Right cardiac atrium (tissue), 5 donors: ENCODE measurements at regions of chr1 and their contacts with region 1.

Region 1: DNA sequence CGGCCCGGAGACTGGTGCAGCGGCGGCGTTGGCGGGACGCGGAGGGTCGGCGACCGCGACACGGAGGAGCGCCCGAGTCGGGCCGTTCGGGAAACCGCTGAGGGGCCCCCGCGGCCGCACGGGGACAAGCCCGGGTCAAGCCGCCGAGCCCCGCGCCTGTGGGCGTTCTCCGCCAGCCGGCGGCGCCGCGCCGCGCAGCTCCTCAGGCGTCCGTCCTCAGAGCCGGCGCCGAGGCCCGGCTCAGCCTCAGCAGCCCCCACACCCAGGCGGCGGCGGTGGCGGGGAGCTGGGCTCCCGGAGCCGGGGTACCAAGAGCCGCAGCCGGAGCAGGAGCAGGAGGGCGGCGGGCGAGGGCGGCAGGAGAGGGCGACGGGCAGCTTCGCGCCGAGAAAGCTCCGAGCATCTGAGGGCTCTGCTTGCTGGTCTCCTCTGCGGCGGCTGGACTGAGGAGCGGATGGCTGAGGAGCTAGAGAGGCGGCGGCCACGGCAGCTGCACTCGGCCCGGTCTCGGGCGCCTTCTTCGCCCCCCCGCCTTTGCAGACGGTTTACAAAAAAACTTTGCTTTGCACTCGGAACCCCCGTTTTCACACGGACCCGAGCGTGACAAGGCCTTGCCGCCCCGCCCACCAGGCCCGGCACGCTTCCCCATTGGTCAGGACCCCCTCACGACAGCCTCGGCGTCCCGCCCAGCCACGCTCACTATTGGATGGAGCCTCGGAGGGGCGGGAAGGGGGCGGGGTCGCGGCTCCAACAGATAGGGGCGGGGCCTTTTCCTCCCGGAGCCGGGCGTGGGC is at the start of gene SLC30A1:
- DNase-seq: peak; percentile 100
- ATAC-seq: peak; percentile 97 to 98
- H3K4me3 ChIP-seq: peak within 1 kb of the TSS; percentile 80
- H3K27ac ChIP-seq: peak within 1 kb of the TSS; percentile 97
- H3K4me1 ChIP-seq: peaks cover 8% of the 10 kb centered on the region
- H3K27me3 ChIP-seq: no peaks in the 10 kb centered on the region
- total RNA-seq, gene SLC30A1: 14.5 to 19.2 (median 14.8) TPM

Region 2: DNA sequence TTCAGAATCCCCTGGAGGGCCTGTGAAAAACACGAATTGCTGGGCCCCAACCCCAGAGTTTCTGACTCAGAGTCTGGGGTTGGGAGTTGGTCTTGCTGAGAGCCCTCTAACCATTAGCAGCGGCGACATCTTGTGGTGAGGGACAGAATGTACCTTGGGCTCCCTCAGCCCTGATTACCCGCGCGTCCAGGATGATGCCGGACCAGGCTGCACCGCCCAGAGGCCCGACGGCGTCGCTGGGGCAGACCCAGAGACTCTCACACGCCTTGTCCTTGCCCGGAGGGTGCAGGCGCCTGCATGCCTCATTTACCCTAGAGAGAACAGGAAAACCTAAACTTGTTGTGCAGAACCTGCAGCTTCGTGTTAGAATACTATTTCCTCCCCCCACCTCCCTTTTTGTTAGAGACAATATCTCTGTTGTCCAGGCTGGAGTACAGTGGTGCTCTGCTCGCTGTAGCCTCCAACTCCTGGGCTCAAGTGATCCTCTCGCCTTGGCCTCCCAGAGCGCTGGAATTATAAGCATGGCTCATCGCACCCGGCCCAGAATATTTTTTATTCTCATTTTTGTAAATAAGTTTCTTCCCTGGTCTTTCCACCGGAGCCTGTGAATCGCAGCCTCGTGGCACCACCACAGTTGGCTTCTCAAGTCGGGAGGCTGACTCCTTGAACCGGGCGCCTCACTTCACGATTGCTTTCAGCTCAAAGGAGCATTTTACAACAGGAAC is 64.6 kb before region 1 on chr1:
- intact Hi-C with region 1: loop called in 1 of 4 experiments (anchors 10 kb)
- DNase-seq: peak; percentile 82 to 89 (median 88)
- ATAC-seq: peak; percentile 91
- H3K4me3 ChIP-seq: no peak overlapping the region
- H3K27ac ChIP-seq: no peak overlapping the region
- H3K4me1 ChIP-seq: no peaks in the 10 kb centered on the region
- H3K27me3 ChIP-seq: no peaks in the 10 kb centered on the region

Region 3: GRCh38 chr1:211520641-211521040 is 58.2 kb before region 1 on chr1:
- intact Hi-C with region 1: loop called in 2 of 4 experiments (anchors 5 to 10 kb)
- DNase-seq: no peak
- ATAC-seq: no peak
- H3K4me3 ChIP-seq: no peak overlapping the region
- H3K27ac ChIP-seq: no peak overlapping the region
- H3K4me1 ChIP-seq: peaks cover 2% of the 10 kb centered on the region
- H3K27me3 ChIP-seq: no peaks in the 10 kb centered on the region

Region 4: DNA sequence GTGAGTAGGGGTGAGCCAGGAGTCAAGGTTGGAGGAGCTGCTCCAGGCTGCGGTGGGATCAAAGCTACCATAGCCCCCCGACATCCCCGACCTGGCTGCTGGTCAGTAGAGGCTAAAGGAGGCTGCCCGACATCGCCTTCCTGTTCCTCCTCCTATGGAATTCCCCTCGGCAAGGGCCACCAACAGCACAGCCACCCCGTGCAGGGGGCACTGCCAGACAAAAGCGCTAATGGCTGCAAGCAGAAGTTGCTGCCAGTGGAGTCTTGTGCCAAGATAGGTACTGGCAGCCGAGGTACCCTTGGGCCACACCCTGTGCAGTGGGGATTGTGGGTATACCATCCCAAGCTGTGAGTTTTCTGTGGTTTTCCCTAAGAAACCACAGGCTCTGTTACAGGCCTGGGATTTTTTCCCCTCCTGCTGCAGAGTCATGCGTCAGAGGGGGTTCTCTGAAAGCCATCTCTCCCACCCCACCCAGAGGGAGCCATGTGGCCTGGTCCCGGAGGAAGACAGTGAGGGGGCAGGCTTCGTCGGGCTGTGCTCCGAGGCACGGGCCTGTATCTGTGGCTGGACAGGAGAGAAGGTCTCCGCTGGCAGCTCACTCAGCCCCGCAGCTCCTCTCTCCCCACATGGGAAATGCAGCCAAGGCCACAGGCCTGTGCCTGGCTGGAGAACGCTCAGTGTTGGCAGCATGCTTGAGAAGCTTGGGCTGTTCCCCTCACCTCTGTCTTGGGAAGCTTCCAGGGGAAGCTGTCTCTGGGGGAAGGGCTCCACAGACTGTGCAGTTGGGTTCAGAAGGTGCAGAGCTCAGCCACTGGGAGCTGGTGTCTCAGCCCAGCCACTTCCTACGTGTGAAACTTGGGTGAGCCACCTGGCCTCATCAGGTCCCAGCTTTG is 54.0 kb after region 1 on chr1:
- intact Hi-C with region 1: loop called in 1 of 4 experiments (anchors 5 kb)
- DNase-seq: peak; percentile 62 to 84 (median 84)
- ATAC-seq: peak; percentile 77 to 83
- H3K4me3 ChIP-seq: no peak overlapping the region
- H3K27ac ChIP-seq: peak overlapping the region; percentile 68
- H3K4me1 ChIP-seq: peaks cover 24% of the 10 kb centered on the region
- H3K27me3 ChIP-seq: no peaks in the 10 kb centered on the region

Region 5: GRCh38 chr1:211648980-211649934 is 70.4 kb after region 1 on chr1:
- intact Hi-C with region 1: loop called in 2 of 4 experiments (anchors 5 kb)
- DNase-seq: peak in 2 of 3 donors; percentile 60 to 82
- ATAC-seq: peak; percentile 85 to 86
- H3K4me3 ChIP-seq: no peak overlapping the region
- H3K27ac ChIP-seq: no peak overlapping the region
- H3K4me1 ChIP-seq: no peaks in the 10 kb centered on the region
- H3K27me3 ChIP-seq: no peaks in the 10 kb centered on the region

Region 6: GRCh38 chr1:211654838-211655787 is 76.3 kb after region 1 on chr1:
- intact Hi-C with region 1: loop called in 3 of 4 experiments (anchors 1 to 5 kb)
- DNase-seq: peak; percentile 89 to 96 (median 96)
- ATAC-seq: peak; percentile 93 to 95
- H3K4me3 ChIP-seq: no peak overlapping the region
- H3K27ac ChIP-seq: no peak overlapping the region
- H3K4me1 ChIP-seq: no peaks in the 10 kb centered on the region
- H3K27me3 ChIP-seq: no peaks in the 10 kb centered on the region

Region 7: GRCh38 chr1:212138441-212138840 is 559.6 kb after region 1 on chr1:
- intact Hi-C with region 1: no loop called
- DNase-seq: no peak
- ATAC-seq: peak; percentile 45 to 64
- H3K4me3 ChIP-seq: no peak overlapping the region
- H3K27ac ChIP-seq: no peak overlapping the region
- H3K4me1 ChIP-seq: no peaks in the 10 kb centered on the region
- H3K27me3 ChIP-seq: no peaks in the 10 kb centered on the region